Left ventricle myocardium superior (tissue), 1 donor: ENCODE measurements at regions of chr5 and their contacts with region 1.

Region 1: GRCh38 chr5:171336521-171337209 is 27.6 kb downstream of the TLX3 start:
- DNase-seq: peak; percentile 49
- ATAC-seq: peak; percentile 78

Region 2: DNA sequence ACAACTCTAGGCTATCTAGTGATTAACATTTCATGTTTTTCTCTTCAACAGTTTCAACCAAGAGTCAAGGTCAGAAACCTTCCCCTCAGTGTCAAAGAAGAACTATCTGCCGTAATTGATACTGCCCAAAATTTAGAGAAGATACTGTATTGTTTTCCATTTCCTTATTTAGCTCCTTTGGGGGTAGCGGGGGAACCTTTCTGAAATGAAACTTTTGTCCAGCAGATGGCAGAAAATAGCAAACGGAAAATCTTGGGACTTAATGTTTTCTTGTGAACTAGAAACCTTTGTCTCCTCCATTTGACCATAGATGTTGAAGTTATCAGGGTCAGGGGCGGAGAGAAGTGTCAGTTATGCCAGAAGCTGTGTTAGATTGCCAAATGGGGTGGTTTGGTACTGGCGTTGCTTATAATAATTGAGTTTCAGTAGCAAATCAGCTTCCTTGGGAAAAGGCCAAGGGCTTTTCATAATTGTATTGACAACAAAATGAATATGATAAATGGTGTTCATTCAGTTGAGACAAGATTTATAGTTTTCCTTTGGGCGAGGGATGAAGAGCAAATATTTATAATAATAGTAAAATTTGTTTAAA is 129.3 kb before region 1 on chr5:
- intact Hi-C with region 1: loop called (anchors 5 kb)
- DNase-seq: no peak
- ATAC-seq: no peak

Region 3: DNA sequence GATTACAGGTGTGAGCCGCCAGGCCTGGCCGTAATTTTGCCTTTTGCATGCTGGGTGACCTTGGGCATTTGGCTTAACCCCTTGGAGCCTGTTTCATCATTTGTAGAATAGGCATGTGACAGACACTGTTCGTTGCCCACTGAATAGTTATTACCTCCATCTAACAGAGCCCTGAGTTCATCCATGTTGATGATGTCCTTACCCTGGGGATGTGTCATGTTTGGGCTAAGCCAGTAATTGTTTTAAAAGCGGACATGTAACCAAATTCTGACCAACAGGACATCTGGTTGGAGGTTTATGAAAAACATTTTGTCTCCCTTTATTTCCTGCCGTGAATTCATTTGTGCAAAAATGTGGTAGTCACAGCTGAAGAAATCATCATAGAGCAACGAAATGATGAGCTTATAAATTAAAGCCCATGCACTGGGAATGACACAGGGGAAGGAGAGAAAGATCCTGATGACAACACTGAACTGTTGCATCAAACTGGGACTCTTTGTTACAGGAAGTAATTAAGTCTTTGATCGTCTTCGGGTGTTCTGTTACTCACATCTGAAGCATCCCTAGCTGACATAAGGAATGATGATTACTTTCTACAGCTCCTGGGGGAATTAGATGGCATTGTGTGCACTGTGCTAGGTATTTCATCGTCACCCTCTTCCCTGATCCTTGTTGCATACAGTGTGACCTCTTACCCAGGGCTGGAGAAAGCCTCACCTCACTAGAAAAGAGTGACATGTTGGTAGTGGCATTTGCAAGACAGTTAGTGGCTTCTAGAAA is 200.6 kb after region 1 on chr5:
- intact Hi-C with region 1: no loop called
- DNase-seq: no peak
- ATAC-seq: no peak